ENCODE measurements at regions of chr10 and their contacts with region 1.

Region 1: DNA sequence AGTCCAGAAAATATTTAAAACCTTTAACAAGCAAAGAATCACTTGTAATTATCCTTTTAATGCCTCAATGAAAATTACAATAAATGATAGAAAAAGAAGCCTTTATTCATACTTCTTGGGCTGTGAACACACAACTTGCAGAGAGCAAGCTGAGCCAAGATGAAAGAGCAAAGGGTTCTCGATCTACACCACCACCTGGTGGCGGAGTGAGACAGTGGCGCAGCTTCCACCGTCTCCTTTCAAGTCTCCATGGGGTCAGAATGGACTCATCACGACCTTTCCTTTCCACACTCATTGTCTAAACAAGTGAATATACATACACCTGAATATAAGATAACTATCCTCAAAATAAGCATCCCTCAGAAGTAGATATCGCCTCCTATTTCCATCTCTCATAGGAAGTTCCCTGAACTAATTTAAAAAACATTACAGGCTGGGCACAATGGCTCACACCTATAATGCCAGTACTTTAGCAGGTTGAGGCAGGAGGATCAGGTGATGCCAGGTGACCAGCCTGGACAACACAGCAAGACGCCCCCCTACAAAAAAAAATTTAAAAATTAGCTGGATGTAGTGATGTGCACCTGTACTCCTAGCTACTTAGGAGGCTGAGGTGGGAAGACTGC is 40.7 kb downstream of the ATE1 start:
- DNase-seq: peak; percentile 72
- H3K4me3 ChIP-seq: no peak overlapping the region
- H3K27ac ChIP-seq: no peak overlapping the region
- H3K4me1 ChIP-seq: no peaks in the 10 kb centered on the region
- H3K27me3 ChIP-seq: no peaks in the 10 kb centered on the region

Region 2: GRCh38 chr10:120950051-120950561 is 937.0 kb before region 1 on chr10:
- in situ Hi-C with region 1: loop called (anchors 10 kb)
- DNase-seq: peak; percentile 40
- H3K4me3 ChIP-seq: peak overlapping the region; percentile 37; the same call in 1 of the 2 replicates
- H3K27ac ChIP-seq: no peak overlapping the region
- H3K4me1 ChIP-seq: no peaks in the 10 kb centered on the region
- H3K27me3 ChIP-seq: peaks cover 24% of the 10 kb centered on the region